ENCODE measurements at regions of chr12 and their contacts with region 1.

Region 1: DNA sequence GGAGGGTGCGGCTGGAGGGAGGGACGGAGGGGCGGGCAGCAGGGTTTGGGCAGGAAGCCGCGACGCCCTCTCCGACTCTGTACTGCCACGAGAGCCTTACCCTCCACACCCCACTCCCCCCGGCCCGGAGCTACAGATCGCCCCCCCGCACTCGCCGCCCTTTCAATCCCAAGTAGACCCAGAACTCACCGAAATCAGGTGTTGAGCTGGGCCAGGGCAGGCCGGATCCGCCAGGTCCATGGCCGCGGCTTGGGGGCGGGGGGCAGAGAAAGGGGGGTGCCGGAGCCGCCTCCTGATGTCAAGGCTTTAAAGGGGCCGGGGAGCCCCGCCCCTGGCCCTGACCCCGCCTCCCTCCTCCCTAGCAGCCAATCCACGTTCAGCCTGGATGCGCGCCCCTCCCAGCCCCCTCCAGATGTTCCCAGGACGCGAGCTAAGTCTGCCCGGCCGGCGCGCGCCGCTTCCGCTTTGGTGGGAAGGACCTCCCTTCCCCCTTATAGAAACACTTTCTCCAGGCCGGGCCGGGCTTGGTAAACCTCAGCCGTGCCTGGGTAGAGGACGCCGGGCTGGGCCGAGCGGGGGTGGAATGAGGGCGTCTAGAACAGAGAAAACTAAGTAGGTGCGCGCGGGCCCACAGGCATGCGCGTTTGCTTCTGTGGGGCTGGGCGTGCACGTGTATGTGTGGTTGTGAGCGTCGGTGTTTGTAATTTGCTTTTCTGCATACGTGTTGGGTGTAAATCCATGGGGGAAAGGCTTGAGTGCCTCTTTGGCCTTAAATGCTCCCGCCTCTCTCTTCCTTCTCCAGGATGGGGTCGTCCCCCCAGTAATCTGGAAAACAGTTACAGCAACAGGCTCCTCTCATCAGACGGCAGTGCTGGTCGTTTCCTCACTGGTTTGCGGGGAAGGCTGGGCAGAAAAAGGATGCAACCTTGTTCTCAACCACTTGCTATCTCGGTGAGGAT is at the start of gene NCKAP5L:
- DNase-seq: peak; percentile 98
- H3K4me3 ChIP-seq: peak within 1 kb of the TSS; percentile 67 to 93 (median 87)
- H3K27ac ChIP-seq: peak within 1 kb of the TSS; percentile 64 to 85 (median 75)
- H3K4me1 ChIP-seq: peaks cover 13 to 35% of the 10 kb centered on the region in 2 donors
- H3K27me3 ChIP-seq: no peaks in the 10 kb centered on the region
- CTCF ChIP-seq: no peak
- POLR2A ChIP-seq: peak in 1 of 2 donors; percentile 69
- total RNA-seq, gene NCKAP5L: 14.1 to 33.7 (median 16.3) TPM

Region 2: GRCh38 chr12:49776413-49776812 is 52.0 kb before region 1 on chr12:
- intact Hi-C with region 1: loop called (anchors 5 kb)
- DNase-seq: peak; percentile 55
- H3K4me3 ChIP-seq: no peak overlapping the region
- H3K27ac ChIP-seq: no peak overlapping the region
- H3K4me1 ChIP-seq: no peaks in the 10 kb centered on the region
- H3K27me3 ChIP-seq: no peaks in the 10 kb centered on the region
- CTCF ChIP-seq: peak; percentile 40 to 80 (median 74)
- POLR2A ChIP-seq: no peak